Spleen (tissue), 13 donors: ENCODE measurements at regions of chr2 and their contacts with region 1.

Region 1: GRCh38 chr2:155622443-155622842 is 710.1 kb downstream of the NR4A2 start:
- DNase-seq: no peak
- H3K4me3 ChIP-seq: no peak overlapping the region
- H3K27ac ChIP-seq: no peak overlapping the region
- H3K4me1 ChIP-seq: no peaks in the 10 kb centered on the region
- H3K27me3 ChIP-seq: no peaks in the 10 kb centered on the region
- CTCF ChIP-seq: no peak
- POLR2A ChIP-seq: no peak

Region 2: GRCh38 chr2:155663265-155663664 is 40.8 kb after region 1 on chr2:
- intact Hi-C with region 1: loop called (anchors 10 kb)
- DNase-seq: no peak
- H3K4me3 ChIP-seq: no peak overlapping the region
- H3K27ac ChIP-seq: no peak overlapping the region
- H3K4me1 ChIP-seq: no peaks in the 10 kb centered on the region
- H3K27me3 ChIP-seq: no peaks in the 10 kb centered on the region
- CTCF ChIP-seq: no peak
- POLR2A ChIP-seq: no peak

Region 3: GRCh38 chr2:155842103-155842502 is 219.7 kb after region 1 on chr2:
- intact Hi-C with region 1: no loop called
- DNase-seq: no peak
- H3K4me3 ChIP-seq: no peak overlapping the region
- H3K27ac ChIP-seq: no peak overlapping the region
- H3K4me1 ChIP-seq: no peaks in the 10 kb centered on the region
- H3K27me3 ChIP-seq: no peaks in the 10 kb centered on the region
- CTCF ChIP-seq: no peak
- POLR2A ChIP-seq: no peak